ENCODE measurements at regions of chr9 and their contacts with region 1.

Region 1: DNA sequence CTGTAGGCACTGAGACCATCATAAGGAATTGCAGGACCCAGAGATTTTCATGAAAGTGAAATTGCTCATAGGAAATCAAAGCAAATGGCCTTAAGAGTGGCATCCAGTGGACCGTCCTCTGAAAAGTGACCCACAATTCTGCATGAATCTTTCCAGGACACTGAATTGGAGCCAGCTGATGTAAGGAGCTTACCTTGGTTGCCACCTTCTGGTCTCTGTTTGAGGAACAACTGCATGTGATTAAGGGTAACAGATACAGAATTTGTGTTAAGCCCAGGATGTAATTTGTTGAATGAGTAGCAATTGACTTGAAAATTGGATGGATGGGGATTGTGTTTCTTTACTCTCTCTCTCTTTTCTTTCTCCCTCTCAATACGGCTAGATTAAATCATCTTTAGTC is 49.9 kb upstream of the GAS1 start:
- DNase-seq: no peak
- ATAC-seq: no peak
- H3K4me3 ChIP-seq: no peak overlapping the region
- H3K27ac ChIP-seq: no peak overlapping the region
- H3K4me1 ChIP-seq: no peaks in the 10 kb centered on the region
- H3K27me3 ChIP-seq: peaks cover 0 to 5% (median 0%) of the 10 kb centered on the region in 9 donors
- CTCF ChIP-seq: no peak
- POLR2A ChIP-seq: no peak

Region 2: DNA sequence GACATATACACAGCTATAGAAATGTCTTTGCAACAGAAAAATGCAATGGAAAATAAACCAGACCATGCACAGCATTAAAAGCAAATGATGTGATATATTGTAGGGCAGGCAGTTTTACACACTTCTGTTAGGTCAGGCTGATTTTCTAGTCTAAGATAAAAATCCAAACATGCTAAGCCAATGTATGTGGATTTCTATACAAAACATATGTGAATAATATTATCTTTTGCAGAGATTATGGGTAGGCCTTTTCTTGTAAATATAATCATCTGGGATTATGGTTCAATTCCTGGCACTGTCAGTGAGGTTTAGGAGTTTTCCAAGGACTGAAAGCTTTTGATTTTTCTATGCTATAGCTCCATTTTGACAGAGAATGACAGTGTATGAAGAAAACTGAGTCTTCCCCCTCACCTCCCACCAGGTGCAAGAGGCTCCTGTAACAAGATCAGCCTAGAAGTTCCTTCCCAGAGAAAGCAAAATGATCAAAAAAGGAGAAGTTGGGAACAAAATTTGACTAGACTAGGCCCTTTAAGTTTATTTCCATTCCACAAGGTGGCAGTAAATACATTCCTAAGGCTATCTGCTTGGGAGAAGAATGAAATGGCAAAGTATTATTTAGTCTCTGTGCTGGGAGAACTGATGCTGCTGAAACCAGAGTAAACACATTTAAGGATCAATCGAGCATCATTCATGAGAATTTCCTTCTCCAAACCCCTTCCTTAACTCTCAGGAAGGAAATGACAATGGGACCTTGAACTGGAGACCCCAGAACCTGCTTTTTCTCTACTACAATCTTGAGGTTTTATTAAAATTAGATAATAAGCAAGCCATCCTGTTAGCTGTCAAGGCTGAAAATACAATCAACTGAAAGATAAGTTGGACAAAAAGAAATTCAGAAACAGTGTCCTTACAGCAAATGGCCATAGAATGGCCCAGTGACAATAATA is 510.0 kb before region 1 on chr9:
- intact Hi-C with region 1: loop called in 1 of 10 experiments (anchors 5 kb)
- DNase-seq: no peak
- ATAC-seq: peak in 3 of 4 donors; percentile 67 to 75 (median 72)
- H3K4me3 ChIP-seq: no peak overlapping the region
- H3K27ac ChIP-seq: no peak overlapping the region
- H3K4me1 ChIP-seq: peaks cover 0 to 8% (median 0%) of the 10 kb centered on the region in 12 donors
- H3K27me3 ChIP-seq: no peaks in the 10 kb centered on the region
- CTCF ChIP-seq: peak; percentile 45 to 77 (median 67)
- POLR2A ChIP-seq: no peak

Region 3: GRCh38 chr9:87020169-87020950 is 23.2 kb after region 1 on chr9:
- intact Hi-C with region 1: no loop called
- DNase-seq: no peak
- ATAC-seq: no peak
- H3K4me3 ChIP-seq: no peak overlapping the region
- H3K27ac ChIP-seq: no peak overlapping the region
- H3K4me1 ChIP-seq: no peaks in the 10 kb centered on the region
- H3K27me3 ChIP-seq: no peaks in the 10 kb centered on the region
- CTCF ChIP-seq: no peak
- POLR2A ChIP-seq: no peak

Measured in heart left ventricle (tissue), 16 donors.